ENCODE measurements at regions of chr1 and their contacts with region 1.

Region 1: DNA sequence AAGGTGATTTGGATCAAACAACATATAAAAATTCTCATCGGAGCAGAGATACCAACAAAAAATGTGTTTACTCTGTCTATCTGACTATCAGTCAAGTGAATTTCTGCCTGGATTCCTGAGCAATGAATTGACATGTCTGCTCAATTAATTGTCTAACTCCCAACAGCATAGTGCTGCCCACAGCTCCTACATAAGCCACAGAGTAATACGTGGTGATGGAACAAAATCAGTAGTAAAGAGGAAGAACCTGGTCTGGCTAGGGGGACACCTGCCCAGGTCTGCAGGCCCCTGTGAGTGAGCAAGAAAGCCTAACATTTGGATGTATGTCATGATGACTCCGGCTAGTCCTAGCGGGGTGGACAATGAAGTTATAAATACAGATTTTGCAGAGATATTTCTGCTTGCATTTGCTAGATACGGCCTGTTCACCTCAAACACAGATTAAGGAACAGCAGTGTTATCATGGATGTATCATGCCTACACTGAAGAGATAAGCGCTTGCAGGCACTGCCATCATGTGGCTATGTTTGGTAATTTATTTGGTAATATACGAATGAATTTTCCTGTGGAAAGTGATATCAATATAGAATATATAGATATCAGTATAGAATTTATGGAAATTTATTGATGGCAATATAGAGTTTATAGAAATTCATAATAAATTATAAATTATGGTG is 69.6 kb upstream of the LRRC8B start:
- DNase-seq: peak; percentile 85
- H3K4me3 Mint-ChIP-seq: no peak overlapping the region
- H3K27ac Mint-ChIP-seq: no peak overlapping the region
- H3K4me1 Mint-ChIP-seq: peaks cover 18% of the 10 kb centered on the region
- H3K27me3 Mint-ChIP-seq: peaks cover 4% of the 10 kb centered on the region

Region 2: GRCh38 chr1:88655685-88656299 is 799.2 kb before region 1 on chr1:
- CTCF ChIA-PET with region 1: no interaction called
- intact Hi-C with region 1: loop called (anchors 2 kb)
- DNase-seq: no peak
- H3K4me3 Mint-ChIP-seq: no peak overlapping the region
- H3K27ac Mint-ChIP-seq: no peak overlapping the region
- H3K4me1 Mint-ChIP-seq: peaks cover 14% of the 10 kb centered on the region
- H3K27me3 Mint-ChIP-seq: no peaks in the 10 kb centered on the region

Region 3: DNA sequence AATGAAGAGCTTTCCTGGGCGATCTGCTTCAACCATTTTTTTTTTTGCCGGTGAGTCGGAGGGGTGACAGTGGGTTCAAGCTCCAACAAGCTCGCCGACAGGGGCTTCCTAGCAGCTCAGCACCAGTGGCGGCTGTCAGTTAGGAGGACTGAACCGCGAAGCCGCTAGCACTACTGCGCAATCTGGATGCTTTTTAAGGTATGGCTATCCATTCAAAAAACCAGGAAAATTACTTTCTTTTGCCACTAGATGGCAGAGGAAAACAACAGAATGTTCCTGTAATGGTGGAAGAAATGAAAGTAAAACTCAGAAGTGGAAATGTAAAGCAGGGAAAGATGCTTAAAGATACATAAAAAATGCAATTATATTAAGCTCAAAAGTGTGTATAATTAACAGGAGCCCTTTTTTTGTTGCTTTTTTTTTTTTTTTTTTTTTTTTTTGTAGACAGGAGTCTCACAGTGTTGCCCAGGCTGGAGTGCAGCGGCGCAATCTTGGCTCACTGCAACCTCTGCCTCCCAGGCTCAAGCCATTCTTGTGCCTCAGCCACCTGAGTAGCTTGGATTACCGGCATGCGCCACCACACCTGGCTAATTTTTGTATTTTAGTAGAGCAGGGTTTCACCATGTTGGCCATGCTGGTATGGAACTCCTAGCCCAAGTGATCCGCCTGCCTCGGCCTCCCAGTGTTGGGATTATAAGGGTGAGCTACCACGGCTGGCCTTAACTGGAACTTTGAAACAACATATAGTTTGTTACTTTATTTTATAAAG is 471.0 kb before region 1 on chr1:
- CTCF ChIA-PET with region 1: interaction called, 13 read pairs
- intact Hi-C with region 1: loop called (anchors 2 kb)
- DNase-seq: peak; percentile 42
- H3K4me3 Mint-ChIP-seq: peak overlapping the region; percentile 27
- H3K27ac Mint-ChIP-seq: peak overlapping the region; percentile 47
- H3K4me1 Mint-ChIP-seq: peaks cover 80% of the 10 kb centered on the region
- H3K27me3 Mint-ChIP-seq: no peaks in the 10 kb centered on the region

Region 4: GRCh38 chr1:89041119-89041641 is 413.8 kb before region 1 on chr1:
- CTCF ChIA-PET with region 1: no interaction called
- intact Hi-C with region 1: loop called (anchors 1 kb)
- DNase-seq: peak; percentile 63
- H3K4me3 Mint-ChIP-seq: peak overlapping the region; percentile 25
- H3K27ac Mint-ChIP-seq: peak overlapping the region; percentile 72
- H3K4me1 Mint-ChIP-seq: peaks cover 33% of the 10 kb centered on the region
- H3K27me3 Mint-ChIP-seq: peaks cover 11% of the 10 kb centered on the region

Region 5: DNA sequence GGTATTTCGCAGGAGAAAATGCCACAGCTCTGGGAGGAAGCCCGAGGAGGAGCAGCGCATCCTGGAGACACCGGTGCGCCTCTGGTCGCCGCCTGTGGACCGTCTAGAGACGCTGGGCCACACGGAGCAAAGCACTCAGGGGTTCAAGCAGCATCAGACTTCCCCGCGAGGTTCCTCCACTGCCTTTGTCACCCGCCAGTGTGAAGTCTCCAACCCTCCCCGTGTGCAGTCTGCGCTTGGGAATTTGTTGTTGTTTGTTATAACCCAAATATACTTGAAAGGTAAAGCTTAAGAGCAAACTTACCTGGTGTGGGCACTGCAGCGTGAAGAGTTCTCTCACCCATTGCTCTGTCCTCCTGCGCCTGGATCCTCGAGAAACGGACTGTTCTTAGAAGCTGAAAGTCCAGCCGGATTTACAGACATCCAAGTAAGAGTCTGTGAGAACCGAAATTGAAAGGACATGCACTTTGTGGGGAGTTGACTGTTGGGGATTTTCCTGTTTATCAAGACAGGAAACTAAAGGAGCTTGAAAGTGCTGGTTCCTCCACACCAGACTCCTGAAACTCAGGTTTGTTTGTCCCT is 256.4 kb before region 1 on chr1 and contains the start of gene GBP4:
- CTCF ChIA-PET with region 1: interaction called, 5 read pairs
- intact Hi-C with region 1: loop called (anchors 1 kb)
- DNase-seq: peak; percentile 65
- H3K4me3 Mint-ChIP-seq: peak within 1 kb of the TSS; percentile 92
- H3K27ac Mint-ChIP-seq: peak within 1 kb of the TSS; percentile 98
- H3K4me1 Mint-ChIP-seq: peaks cover 84% of the 10 kb centered on the region
- H3K27me3 Mint-ChIP-seq: no peaks in the 10 kb centered on the region
- total RNA-seq, gene GBP4: 22.9 to 23.2 TPM

Region 6: GRCh38 chr1:89394851-89395250 is 60.1 kb before region 1 on chr1:
- CTCF ChIA-PET with region 1: no interaction called
- intact Hi-C with region 1: no loop called
- DNase-seq: no peak
- H3K4me3 Mint-ChIP-seq: no peak overlapping the region
- H3K27ac Mint-ChIP-seq: no peak overlapping the region
- H3K4me1 Mint-ChIP-seq: no peaks in the 10 kb centered on the region
- H3K27me3 Mint-ChIP-seq: no peaks in the 10 kb centered on the region

Region 7: GRCh38 chr1:89429062-89429461 is 25.9 kb before region 1 on chr1:
- CTCF ChIA-PET with region 1: no interaction called
- intact Hi-C with region 1: loop called (anchors 1 kb)
- DNase-seq: no peak
- H3K4me3 Mint-ChIP-seq: no peak overlapping the region
- H3K27ac Mint-ChIP-seq: no peak overlapping the region
- H3K4me1 Mint-ChIP-seq: peaks cover 4% of the 10 kb centered on the region
- H3K27me3 Mint-ChIP-seq: peaks cover 2% of the 10 kb centered on the region